ENCODE measurements at regions of chr11 and their contacts with region 1.

Region 1: GRCh38 chr11:120303004-120303637 is 22.0 kb upstream of the TLCD5 start:
- DNase-seq: peak; percentile 75 to 85 (median 76)
- H3K4me3 ChIP-seq: no peak overlapping the region
- H3K27ac ChIP-seq: no peak overlapping the region
- H3K4me1 ChIP-seq: no peaks in the 10 kb centered on the region
- H3K27me3 ChIP-seq: peaks cover 0 to 20% (median 0%) of the 10 kb centered on the region in 5 experiments

Region 2: DNA sequence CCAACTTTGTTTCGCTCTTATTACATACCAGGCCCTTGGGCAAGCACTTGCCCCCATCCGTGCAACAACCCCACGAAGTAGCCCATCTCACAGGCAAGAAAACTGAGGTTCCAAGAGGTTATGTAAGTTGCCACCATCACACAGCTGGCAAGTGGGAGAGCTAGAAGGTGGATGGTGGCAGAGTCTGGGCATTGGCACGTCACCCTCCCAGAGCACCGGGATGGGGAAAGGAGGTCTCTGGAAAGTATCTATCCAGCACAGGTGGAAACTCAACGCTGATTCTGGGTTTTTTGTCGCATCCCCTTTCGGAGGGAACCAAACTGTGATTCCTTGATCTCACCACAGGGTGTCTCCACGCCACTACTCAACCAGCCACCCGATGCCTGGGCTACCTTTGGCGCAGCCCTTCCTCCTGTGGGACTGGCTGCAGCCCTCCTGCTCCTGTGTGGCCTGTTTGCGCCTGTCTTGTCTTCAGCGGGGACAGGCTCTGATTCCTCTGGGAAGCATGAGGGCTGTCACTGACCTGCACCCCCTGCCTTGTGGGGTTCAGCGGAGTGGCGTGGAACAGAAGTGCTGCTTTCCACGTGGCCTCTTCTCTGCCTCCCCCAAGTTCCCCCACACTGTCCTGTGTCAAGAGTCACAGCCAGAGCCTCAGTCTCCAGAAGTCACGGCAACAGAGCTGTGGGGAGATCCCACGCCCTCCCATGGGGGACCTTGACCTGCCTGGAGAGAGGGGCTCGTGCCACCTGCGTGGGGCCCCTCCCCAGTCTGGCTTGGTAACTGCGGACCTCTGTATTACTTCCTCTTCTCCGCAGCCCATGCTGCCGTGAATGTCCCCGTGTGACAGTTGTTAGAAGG is 130.8 kb before region 1 on chr11:
- CTCF ChIA-PET with region 1: interaction called, 38 read pairs
- POLR2A ChIA-PET with region 1: no interaction called
- DNase-seq: peak; percentile 66 to 76 (median 73)
- H3K4me3 ChIP-seq: peak overlapping the region in 5 of 7 experiments; percentile 3 to 57 (median 41)
- H3K27ac ChIP-seq: no peak overlapping the region
- H3K4me1 ChIP-seq: peaks cover 0 to 28% (median 26%) of the 10 kb centered on the region in 4 experiments
- H3K27me3 ChIP-seq: peaks cover 1 to 44% (median 25%) of the 10 kb centered on the region in 5 experiments

Region 3: GRCh38 chr11:120235024-120235861 is 67.9 kb before region 1 on chr11:
- CTCF ChIA-PET with region 1: interaction called, 269 read pairs
- POLR2A ChIA-PET with region 1: no interaction called
- DNase-seq: peak; percentile 70 to 78 (median 74)
- H3K4me3 ChIP-seq: no peak overlapping the region
- H3K27ac ChIP-seq: no peak overlapping the region
- H3K4me1 ChIP-seq: peaks cover 0 to 7% (median 3%) of the 10 kb centered on the region in 4 experiments
- H3K27me3 ChIP-seq: peaks cover 0 to 42% (median 23%) of the 10 kb centered on the region in 5 experiments

Region 4: DNA sequence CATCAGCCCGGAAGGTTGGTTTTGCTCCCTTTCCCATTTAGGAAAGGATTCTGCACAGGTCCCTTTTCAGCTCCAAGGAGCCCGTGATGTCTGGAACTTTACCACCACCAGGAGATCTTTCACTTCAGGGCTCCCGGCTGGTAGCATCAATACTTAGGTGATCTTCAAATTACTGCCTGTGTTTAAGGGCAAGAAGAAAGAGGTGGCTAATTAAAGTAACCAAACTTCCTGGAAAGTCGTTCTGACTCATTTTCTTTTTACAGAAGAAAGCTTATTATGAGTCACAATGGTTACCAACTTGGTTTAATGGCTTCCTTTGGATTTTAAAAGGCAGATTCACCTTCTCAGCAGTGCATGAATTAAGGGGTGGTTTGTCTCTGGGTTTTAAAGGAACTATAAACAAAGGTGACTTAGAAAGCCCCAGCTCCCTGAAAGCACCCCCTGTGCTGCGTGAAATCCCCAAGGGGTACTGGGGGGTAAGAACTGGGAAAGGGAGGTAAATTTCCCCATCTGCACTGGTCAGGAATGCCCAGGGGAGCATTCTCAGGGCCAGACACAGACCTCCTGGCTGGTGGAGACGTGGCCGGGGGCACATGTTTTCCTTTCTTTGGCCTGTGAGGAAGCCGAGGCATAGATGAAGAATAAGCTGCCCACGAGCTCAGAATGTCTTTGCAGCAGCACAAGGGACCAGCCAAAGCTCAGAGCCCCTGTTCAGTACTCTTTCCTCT is 54.4 kb before region 1 on chr11:
- CTCF ChIA-PET with region 1: interaction called, 69 read pairs
- POLR2A ChIA-PET with region 1: no interaction called
- DNase-seq: peak in 2 of 3 donors; percentile 49 to 53
- H3K4me3 ChIP-seq: no peak overlapping the region
- H3K27ac ChIP-seq: no peak overlapping the region
- H3K4me1 ChIP-seq: peaks cover 0 to 3% (median under 1%) of the 10 kb centered on the region in 4 experiments
- H3K27me3 ChIP-seq: peaks cover 0 to 82% (median 10%) of the 10 kb centered on the region in 5 experiments

Region 5: GRCh38 chr11:120285256-120285655 is 17.9 kb before region 1 on chr11:
- CTCF ChIA-PET with region 1: interaction called, 40 read pairs
- POLR2A ChIA-PET with region 1: no interaction called
- DNase-seq: no peak
- H3K4me3 ChIP-seq: no peak overlapping the region
- H3K27ac ChIP-seq: no peak overlapping the region
- H3K4me1 ChIP-seq: no peaks in the 10 kb centered on the region
- H3K27me3 ChIP-seq: peaks cover 3 to 20% (median 9%) of the 10 kb centered on the region in 5 experiments

Region 6: DNA sequence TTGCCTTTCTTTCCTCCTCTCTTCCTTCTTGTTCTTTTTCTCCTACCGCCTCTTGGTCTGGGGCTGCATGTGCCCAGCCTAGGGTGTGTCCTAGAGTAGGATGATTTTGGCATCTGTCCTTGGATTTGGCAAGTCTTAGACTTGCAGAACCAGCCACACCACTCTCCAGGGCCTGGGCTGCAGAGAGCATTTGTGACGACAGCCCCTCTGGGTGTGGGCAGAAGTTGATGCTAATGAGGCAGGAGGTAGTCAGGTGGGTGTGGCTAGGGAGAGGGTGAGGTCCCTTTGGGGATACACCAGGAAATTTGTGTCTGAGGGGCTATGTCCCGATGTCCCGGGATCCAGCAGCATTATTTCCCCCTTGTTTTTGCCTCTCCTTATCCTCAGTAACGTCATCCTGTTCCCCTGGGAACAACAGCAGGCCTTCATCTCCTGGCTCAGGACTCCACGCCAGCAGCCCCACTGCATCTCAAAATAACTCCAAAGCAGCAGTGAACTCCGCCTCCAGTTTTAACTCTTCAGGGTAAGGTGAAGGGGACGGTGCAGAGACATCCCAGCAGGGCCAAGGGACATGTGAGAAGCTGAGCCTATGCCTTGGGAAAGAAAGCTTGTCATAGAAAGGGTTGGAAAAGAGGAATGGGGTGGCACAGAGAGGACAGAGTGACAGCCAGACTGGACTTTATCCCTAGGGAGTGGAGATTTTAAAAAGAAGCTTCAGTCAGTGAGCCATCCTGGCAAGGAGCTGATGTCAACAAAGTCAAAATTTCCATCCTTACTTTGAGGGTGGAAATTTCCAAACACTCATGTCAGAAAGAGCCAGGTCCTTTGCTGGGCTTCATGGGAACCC is 13.9 kb after region 1 on chr11:
- CTCF ChIA-PET with region 1: interaction called, 78 read pairs
- POLR2A ChIA-PET with region 1: no interaction called
- DNase-seq: no peak
- H3K4me3 ChIP-seq: no peak overlapping the region
- H3K27ac ChIP-seq: no peak overlapping the region
- H3K4me1 ChIP-seq: no peaks in the 10 kb centered on the region
- H3K27me3 ChIP-seq: peaks cover 0 to 25% (median 9%) of the 10 kb centered on the region in 5 experiments

Region 7: DNA sequence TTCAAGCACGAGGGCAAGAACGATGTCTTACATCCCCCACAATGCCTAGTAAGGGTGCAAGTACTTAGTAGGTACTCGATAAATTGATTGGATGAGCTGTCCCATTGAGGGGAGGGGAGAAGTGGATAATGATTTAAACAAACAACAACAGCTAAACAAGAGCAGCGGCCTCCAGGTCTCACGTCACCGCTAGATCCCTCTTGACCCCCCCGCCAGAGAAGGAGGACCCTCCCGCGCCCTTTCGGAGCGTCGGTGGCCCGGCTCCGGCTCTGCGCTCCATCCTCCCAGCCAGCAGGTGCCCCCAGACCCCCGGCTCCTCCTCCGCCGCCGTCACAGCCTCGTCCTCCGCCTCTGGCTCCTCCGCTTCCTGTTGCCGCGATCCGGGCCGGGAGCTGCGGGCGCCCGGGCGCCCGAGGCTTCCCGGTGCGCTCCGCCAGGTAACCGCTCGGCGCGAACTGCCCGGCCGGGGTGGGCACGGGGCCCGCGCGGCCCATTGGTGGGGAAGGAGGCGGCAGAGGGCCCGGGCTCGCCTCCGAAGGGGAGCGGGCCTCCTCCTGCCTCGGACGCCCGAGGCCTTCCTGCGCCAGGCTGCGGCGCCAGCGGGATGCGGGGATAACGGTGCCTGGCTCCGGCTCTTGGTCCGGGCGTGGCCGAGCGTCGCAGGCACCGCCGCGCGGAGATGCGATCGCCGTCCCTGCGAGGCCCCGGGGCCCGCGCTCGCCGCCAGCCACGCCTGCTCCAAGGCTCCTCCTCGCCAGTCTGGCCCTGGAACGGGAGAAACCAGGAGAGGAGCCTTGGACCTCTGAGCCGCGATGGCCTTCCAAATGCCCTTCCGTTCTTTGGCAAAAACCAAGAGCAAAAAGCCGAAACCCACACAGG is 22.1 kb after region 1 on chr11 and contains the start of gene TLCD5:
- CTCF ChIA-PET with region 1: interaction called, 11 read pairs
- POLR2A ChIA-PET with region 1: no interaction called
- DNase-seq: peak; percentile 81 to 89 (median 85)
- H3K4me3 ChIP-seq: peak within 1 kb of the TSS; percentile 57 to 82 (median 71)
- H3K27ac ChIP-seq: peak within 1 kb of the TSS; percentile 27 to 73
- H3K4me1 ChIP-seq: peaks cover 1 to 29% (median 15%) of the 10 kb centered on the region in 4 experiments
- H3K27me3 ChIP-seq: peaks cover 0 to 16% (median 0%) of the 10 kb centered on the region in 5 experiments

Region 8: GRCh38 chr11:120517390-120517761 is 214.3 kb after region 1 on chr11:
- CTCF ChIA-PET with region 1: no interaction called
- POLR2A ChIA-PET with region 1: no interaction called
- DNase-seq: no peak
- H3K4me3 ChIP-seq: no peak overlapping the region
- H3K27ac ChIP-seq: no peak overlapping the region
- H3K4me1 ChIP-seq: no peaks in the 10 kb centered on the region
- H3K27me3 ChIP-seq: peaks cover 2 to 63% (median 32%) of the 10 kb centered on the region in 5 experiments

Measured in common myeloid progenitor, CD34-positive (primary cell).